Mammary epithelial cell (primary cell): ENCODE measurements at regions of chr15 and their contacts with region 1.

Region 1: DNA sequence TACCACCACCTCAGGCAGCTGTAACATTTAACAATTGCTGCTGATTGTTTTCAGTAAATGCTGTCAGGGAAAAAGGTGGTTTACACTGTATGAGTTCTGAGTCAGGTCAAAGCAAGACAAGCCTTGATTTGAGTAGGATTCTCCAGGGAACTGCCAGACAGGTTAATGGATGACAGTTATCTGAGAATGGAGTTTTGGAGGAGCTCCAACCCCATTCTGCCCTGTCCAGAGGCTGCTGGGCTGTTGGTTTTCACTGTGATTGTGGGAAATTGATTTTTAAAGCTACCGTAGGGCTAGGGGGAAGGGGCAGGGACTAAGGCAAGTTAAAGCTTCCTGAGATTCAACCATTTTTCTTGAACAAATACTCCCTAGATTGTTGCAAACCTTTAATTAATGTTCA is 39.9 kb downstream of the TICRR start:
- DNase-seq: no peak
- H3K4me3 ChIP-seq: no peak overlapping the region
- H3K27ac ChIP-seq: no peak overlapping the region
- H3K4me1 ChIP-seq: no peaks in the 10 kb centered on the region
- H3K27me3 ChIP-seq: no peaks in the 10 kb centered on the region
- CTCF ChIP-seq: no peak

Region 2: GRCh38 chr15:89723031-89723430 is 107.9 kb after region 1 on chr15:
- CTCF ChIA-PET with region 1: no interaction called
- dilution Hi-C with region 1: loop called (anchors 5 kb)
- in situ Hi-C with region 1: no loop called
- intact Hi-C with region 1: no loop called
- DNase-seq: no peak
- H3K4me3 ChIP-seq: no peak overlapping the region
- H3K27ac ChIP-seq: no peak overlapping the region
- H3K4me1 ChIP-seq: no peaks in the 10 kb centered on the region
- H3K27me3 ChIP-seq: peaks cover 3% of the 10 kb centered on the region
- CTCF ChIP-seq: no peak

Region 3: GRCh38 chr15:90126457-90127435 is 511.6 kb after region 1 on chr15:
- CTCF ChIA-PET with region 1: no interaction called
- dilution Hi-C with region 1: no loop called
- in situ Hi-C with region 1: no loop called
- intact Hi-C with region 1: no loop called
- DNase-seq: no peak
- H3K4me3 ChIP-seq: no peak overlapping the region
- H3K27ac ChIP-seq: no peak overlapping the region
- H3K4me1 ChIP-seq: no peaks in the 10 kb centered on the region
- H3K27me3 ChIP-seq: no peaks in the 10 kb centered on the region
- CTCF ChIP-seq: no peak